HCT116 (cell line): ENCODE measurements at regions of chrX and their contacts with region 1.

Region 1: GRCh38 chrX:154918060-154918483 is 31.9 kb downstream of the F8A1 start:
- DNase-seq: peak; percentile 63
- ATAC-seq: peak; percentile 92
- H3K4me3 ChIP-seq: peak overlapping the region in 1 of 2 experiments; percentile 38; a peak in 3 of 4 replicates
- H3K27ac ChIP-seq: no peak overlapping the region
- H3K4me1 ChIP-seq: no peaks in the 10 kb centered on the region; a peak in 1 of 4 replicates
- H3K27me3 ChIP-seq: no peaks in the 10 kb centered on the region
- CTCF ChIP-seq: peak; percentile 49 to 64 (median 62); a peak in 5 of 6 replicates
- POLR2A ChIP-seq: no peak
- RAD21 ChIP-seq: peak; percentile 85

Region 2: DNA sequence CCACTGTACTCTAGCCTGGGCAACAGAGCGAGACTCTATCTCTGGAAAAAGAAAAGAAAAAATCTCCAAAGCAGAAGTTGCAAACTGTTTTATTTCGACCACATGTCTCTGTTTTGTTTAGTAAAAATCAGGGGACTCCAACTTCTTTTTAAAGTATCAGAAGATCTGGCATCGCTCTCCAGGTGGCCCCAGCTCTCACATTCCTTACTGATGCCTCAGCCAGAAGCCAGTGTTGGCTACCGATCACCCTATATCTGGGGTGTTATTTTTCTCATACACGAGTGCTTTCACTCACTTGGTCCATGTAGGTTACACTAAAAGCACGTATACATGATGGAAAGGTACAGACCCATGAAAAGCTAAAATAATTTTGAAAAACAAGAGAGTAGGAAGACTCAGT is 121.1 kb before region 1 on chrX:
- CTCF ChIA-PET with region 1: no interaction called
- POLR2A ChIA-PET with region 1: no interaction called
- RAD21 ChIA-PET with region 1: no interaction called
- intact Hi-C with region 1: no loop called
- DNase-seq: no peak
- ATAC-seq: peak; percentile 63
- H3K4me3 ChIP-seq: peak overlapping the region in 1 of 2 experiments; percentile 13; a peak in 1 of 4 replicates
- H3K27ac ChIP-seq: no peak overlapping the region
- H3K4me1 ChIP-seq: peaks cover 29 to 45% of the 10 kb centered on the region in 2 experiments
- H3K27me3 ChIP-seq: no peaks in the 10 kb centered on the region
- CTCF ChIP-seq: no peak
- POLR2A ChIP-seq: no peak
- RAD21 ChIP-seq: no peak

Region 3: GRCh38 chrX:155056877-155057792 is 139.1 kb after region 1 on chrX:
- CTCF ChIA-PET with region 1: interaction called, 4 read pairs
- POLR2A ChIA-PET with region 1: no interaction called
- RAD21 ChIA-PET with region 1: no interaction called
- intact Hi-C with region 1: loop called (anchors 1 kb)
- DNase-seq: peak; percentile 51
- ATAC-seq: peak; percentile 97
- H3K4me3 ChIP-seq: peak overlapping the region in 1 of 2 experiments; percentile 30; a peak in 1 of 4 replicates
- H3K27ac ChIP-seq: no peak overlapping the region
- H3K4me1 ChIP-seq: peaks cover 2 to 9% of the 10 kb centered on the region in 2 experiments; a peak in 1 of 4 replicates
- H3K27me3 ChIP-seq: no peaks in the 10 kb centered on the region
- CTCF ChIP-seq: peak; percentile 52 to 62 (median 60); a peak in 5 of 6 replicates
- POLR2A ChIP-seq: no peak
- RAD21 ChIP-seq: peak; percentile 59

Region 4: GRCh38 chrX:155086202-155086840 is 168.2 kb after region 1 on chrX:
- CTCF ChIA-PET with region 1: interaction called, 3 read pairs
- POLR2A ChIA-PET with region 1: no interaction called
- RAD21 ChIA-PET with region 1: no interaction called
- intact Hi-C with region 1: loop called (anchors 10 kb)
- DNase-seq: peak; percentile 31
- ATAC-seq: peak; percentile 87
- H3K4me3 ChIP-seq: no peak overlapping the region
- H3K27ac ChIP-seq: no peak overlapping the region
- H3K4me1 ChIP-seq: no peaks in the 10 kb centered on the region
- H3K27me3 ChIP-seq: no peaks in the 10 kb centered on the region
- CTCF ChIP-seq: peak; percentile 30 to 59 (median 50); a peak in 5 of 6 replicates
- POLR2A ChIP-seq: no peak
- RAD21 ChIP-seq: peak; percentile 52

Region 5: DNA sequence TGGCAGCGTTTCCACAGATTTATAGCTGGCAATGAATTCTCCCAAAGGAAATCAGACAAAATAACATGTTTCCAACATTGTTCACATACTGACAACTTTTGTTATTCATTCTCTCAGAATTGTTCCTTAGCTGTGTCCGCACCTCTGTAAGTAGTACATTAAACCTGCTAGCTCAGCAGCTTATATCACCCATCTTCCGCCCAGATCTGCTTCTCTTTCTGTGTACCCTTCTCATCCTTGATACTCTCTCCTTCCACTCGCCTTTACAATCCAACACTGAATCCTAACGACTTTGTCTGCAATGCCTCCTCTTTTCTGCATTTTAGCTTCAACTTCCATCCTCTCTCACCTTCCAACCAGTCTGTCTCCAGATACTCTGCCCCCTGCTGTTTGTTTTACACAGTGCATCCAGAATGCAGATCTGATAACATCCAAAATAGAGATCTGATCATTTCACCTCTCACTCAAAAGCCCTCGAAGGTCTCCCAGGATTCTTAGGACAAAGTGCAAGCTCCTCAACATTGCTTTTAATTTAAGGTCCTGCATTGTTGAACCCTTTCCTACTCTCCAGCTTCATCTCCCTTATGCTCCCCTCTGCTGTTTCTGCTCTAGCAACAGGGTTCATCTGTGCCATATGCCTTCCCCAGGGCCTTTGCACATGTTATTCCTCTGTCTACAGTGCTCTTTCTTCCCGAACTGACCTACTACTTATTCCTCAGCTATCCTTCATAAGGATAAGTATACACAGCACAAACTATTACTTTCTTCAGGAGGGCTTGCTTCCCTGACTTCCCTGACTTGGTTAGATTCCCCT is 230.9 kb after region 1 on chrX:
- CTCF ChIA-PET with region 1: interaction called, 24 read pairs
- POLR2A ChIA-PET with region 1: no interaction called
- RAD21 ChIA-PET with region 1: interaction called in 1 of 2 experiments, 3 read pairs
- intact Hi-C with region 1: loop called (anchors 5 kb)
- DNase-seq: no peak
- ATAC-seq: peak; percentile 72; the same call in 1 of the 2 replicates
- H3K4me3 ChIP-seq: no peak overlapping the region
- H3K27ac ChIP-seq: no peak overlapping the region
- H3K4me1 ChIP-seq: no peaks in the 10 kb centered on the region
- H3K27me3 ChIP-seq: no peaks in the 10 kb centered on the region
- CTCF ChIP-seq: peak; percentile 42 to 68 (median 62); a peak in 5 of 6 replicates
- POLR2A ChIP-seq: no peak
- RAD21 ChIP-seq: peak; percentile 33; the same call in 1 of the 2 replicates

Region 6: DNA sequence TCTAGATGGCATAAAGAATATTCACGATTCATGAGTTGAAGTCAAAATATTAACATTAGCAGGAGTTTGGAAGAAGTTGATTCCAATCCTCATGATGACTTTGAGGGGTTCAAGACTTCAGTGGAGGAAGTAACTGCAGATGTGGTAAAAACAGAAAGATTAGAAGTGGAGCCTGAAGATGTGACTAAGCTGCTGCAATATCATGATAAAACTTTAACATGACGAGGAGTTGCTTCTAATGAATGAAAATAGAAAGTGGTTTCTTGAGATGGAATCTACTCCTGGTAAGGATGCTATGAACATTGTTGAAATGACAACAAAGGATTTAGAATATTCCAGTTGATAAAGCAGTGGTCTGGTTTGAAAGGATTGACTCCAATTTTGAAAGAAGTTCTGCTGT is 764.8 kb after region 1 on chrX:
- CTCF ChIA-PET with region 1: no interaction called
- POLR2A ChIA-PET with region 1: no interaction called
- RAD21 ChIA-PET with region 1: no interaction called
- intact Hi-C with region 1: no loop called
- DNase-seq: no peak
- ATAC-seq: no peak
- H3K4me3 ChIP-seq: no peak overlapping the region
- H3K27ac ChIP-seq: no peak overlapping the region
- H3K4me1 ChIP-seq: no peaks in the 10 kb centered on the region
- H3K27me3 ChIP-seq: no peaks in the 10 kb centered on the region
- CTCF ChIP-seq: no peak
- POLR2A ChIP-seq: no peak
- RAD21 ChIP-seq: no peak

Region 7: GRCh38 chrX:155819966-155820491 is 902.0 kb after region 1 on chrX:
- CTCF ChIA-PET with region 1: no interaction called
- POLR2A ChIA-PET with region 1: no interaction called
- RAD21 ChIA-PET with region 1: no interaction called
- intact Hi-C with region 1: loop called (anchors 1 kb)
- DNase-seq: peak; percentile 75
- ATAC-seq: peak; percentile 94
- H3K4me3 ChIP-seq: no peak overlapping the region
- H3K27ac ChIP-seq: no peak overlapping the region
- H3K4me1 ChIP-seq: peaks cover 0 to 5% of the 10 kb centered on the region in 2 experiments; a peak in 1 of 4 replicates
- H3K27me3 ChIP-seq: no peaks in the 10 kb centered on the region
- CTCF ChIP-seq: peak; percentile 58 to 67 (median 62); a peak in 5 of 6 replicates
- POLR2A ChIP-seq: no peak
- RAD21 ChIP-seq: peak; percentile 92